Activated CD4-positive, alpha-beta memory T cell treated with anti-CD3 and anti-CD28 coated beads for 36 hours (primary cell): ENCODE measurements at regions of chr12 and their contacts with region 1.

Region 1: DNA sequence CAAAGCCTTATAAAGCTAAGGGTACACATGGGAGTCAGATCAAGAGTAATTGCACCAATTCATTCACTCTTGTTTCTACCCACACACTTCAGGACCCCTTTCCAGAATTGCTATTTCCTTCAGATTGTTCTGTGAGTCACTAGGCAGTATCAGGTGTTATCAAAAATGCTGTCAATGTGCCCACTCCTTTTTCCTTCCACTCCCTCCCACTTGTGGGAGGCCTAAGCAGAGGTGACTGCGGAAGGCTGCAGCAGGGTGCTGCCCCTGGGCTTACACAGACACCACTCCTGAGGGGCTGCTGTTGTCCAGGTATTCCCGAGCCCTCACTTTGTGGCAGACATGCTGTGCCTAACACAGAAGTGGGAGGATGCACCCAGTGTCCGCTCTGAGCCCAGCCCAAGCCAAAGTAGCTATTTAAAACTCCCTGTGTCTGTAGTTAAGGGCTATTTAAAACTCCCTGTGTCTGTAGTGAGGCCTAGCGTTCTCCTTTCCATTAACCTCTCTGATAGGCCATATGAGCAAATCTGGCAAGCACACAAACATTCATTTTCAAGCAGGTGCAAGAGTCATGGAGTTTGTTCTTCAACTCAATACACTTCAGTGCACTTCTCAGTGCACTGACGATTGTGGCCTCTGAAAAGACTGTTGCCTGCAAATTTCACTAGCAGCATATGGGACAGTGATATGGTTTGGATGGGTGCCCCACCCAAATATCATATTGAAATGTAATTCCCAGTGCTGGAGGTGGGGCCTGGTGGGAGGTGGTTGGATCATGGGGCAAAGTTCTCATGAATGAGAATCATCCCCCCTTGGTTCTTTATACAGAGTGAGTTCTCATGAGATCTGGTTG is 117.8 kb downstream of the PHLDA1 start:
- DNase-seq: peak; percentile 73
- H3K4me3 Mint-ChIP-seq: no peak overlapping the region
- H3K27ac Mint-ChIP-seq: peak overlapping the region; percentile 9
- H3K4me1 Mint-ChIP-seq: peaks cover 28% of the 10 kb centered on the region
- H3K27me3 Mint-ChIP-seq: no peaks in the 10 kb centered on the region

Region 2: DNA sequence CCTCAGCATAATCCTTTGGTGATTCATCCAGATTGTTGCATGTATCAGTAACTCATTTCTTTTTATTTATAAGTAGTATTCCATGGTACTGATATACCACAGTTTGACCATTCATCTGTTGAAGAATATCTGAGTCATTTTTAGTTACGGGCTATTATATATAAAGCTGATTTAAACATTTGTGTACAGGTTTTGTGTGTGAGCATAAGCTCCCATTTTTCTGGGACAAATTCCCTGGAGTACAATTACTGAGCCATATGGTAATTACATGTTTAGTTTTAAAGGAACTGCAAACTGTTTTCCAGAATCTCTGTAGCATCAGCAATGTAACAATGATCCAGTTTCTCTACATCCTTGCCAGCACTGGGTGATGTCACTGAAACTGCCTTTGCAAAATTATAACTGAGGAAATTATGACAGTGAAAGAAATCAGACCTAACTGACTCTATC is 166.1 kb before region 1 on chr12:
- CTCF ChIA-PET with region 1: no interaction called
- POLR2A ChIA-PET with region 1: no interaction called
- intact Hi-C with region 1: no loop called
- DNase-seq: no peak
- H3K4me3 Mint-ChIP-seq: no peak overlapping the region
- H3K27ac Mint-ChIP-seq: no peak overlapping the region
- H3K4me1 Mint-ChIP-seq: no peaks in the 10 kb centered on the region
- H3K27me3 Mint-ChIP-seq: peaks cover 5% of the 10 kb centered on the region

Region 3: GRCh38 chr12:75850721-75851462 is 62.8 kb before region 1 on chr12:
- CTCF ChIA-PET with region 1: no interaction called
- POLR2A ChIA-PET with region 1: no interaction called
- intact Hi-C with region 1: no loop called
- DNase-seq: no peak
- H3K4me3 Mint-ChIP-seq: no peak overlapping the region
- H3K27ac Mint-ChIP-seq: no peak overlapping the region
- H3K4me1 Mint-ChIP-seq: no peaks in the 10 kb centered on the region
- H3K27me3 Mint-ChIP-seq: peaks cover 16% of the 10 kb centered on the region

Region 4: DNA sequence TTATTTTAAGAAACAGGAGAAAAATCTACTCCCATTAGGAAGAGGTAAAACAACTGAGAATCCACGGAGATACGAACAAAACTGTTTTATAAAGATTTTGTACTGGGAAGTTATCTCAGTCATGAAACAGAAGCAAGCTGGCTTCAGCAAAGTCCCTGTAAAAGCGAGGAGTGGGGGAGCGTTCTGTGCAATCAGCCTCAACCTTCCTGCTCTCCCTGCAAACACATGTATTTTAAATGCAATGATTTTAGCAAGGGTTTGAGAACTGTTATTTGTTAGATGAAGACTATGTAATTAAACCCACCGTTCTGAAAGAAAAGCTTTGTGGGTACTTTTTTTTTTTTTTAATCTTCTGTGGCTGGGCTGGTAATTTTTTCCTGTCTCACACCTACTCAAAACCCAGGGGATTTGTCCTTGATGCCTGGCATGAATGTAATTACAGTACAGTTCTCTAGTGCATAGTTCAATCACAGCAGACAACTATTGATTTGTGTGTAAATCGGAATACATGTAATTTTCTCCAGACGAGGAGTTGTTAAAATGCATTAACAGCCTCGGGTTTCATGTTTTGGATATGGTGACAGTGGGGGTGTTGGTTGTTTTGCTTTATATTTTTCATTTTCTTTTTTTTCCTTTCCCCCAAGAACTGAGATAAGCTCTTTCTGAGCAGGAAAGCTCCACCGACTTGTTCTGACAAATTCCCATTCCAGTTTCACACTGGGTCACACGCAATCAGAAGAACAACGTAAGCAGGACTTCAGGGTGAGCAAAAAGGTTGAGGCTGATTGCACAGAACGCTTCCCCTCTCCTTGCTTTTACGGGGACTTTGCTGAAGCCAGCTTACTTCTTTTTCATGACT is 35.7 kb before region 1 on chr12:
- CTCF ChIA-PET with region 1: no interaction called
- POLR2A ChIA-PET with region 1: no interaction called
- intact Hi-C with region 1: loop called (anchors 1 kb)
- DNase-seq: no peak
- H3K4me3 Mint-ChIP-seq: no peak overlapping the region
- H3K27ac Mint-ChIP-seq: no peak overlapping the region
- H3K4me1 Mint-ChIP-seq: peaks cover 9% of the 10 kb centered on the region
- H3K27me3 Mint-ChIP-seq: peaks cover 10% of the 10 kb centered on the region

Region 5: DNA sequence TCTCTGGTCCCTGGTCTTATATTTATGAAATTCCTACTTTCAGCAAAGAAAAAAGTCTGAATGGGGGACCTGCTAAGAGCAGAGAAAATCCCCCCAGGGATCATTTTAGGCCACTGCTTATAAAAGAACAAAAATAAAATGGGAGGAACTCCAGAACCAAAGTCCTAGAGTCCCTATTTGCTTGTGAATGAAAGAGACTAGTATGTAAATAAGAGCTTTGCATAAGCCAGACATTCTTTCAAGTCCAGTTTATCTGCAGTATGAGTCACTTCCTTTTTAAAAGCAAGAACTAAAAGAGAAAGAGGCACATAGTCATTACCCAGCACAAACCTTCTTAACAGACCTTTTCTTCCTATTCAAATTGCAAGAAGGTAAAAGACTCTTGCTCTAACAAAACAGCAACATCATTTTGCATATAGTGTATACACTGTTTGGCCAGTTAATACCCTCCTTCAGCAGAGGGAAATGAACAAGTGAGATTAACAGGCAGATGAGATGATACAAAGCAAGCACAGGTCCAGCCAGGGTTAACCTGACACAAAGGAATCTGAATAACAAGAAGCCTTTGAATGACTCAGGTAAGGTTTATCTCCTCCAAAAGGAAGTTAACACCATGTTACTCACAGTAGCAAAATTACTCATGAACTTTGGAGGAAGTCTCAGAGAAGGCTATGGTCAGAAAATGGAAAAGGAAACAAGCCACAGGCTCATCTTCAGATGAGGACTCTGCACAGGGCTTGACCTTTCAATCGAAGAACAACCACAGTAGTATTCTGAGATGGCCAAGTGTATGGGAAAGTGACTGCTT is 30.6 kb after region 1 on chr12:
- CTCF ChIA-PET with region 1: no interaction called
- POLR2A ChIA-PET with region 1: no interaction called
- intact Hi-C with region 1: loop called (anchors 1 kb)
- DNase-seq: peak; percentile 42
- H3K4me3 Mint-ChIP-seq: peak overlapping the region; percentile 34
- H3K27ac Mint-ChIP-seq: peak overlapping the region; percentile 95
- H3K4me1 Mint-ChIP-seq: peaks cover 29% of the 10 kb centered on the region
- H3K27me3 Mint-ChIP-seq: no peaks in the 10 kb centered on the region